Calu3 (cell line): ENCODE measurements at regions of chr13 and their contacts with region 1.

Region 1: GRCh38 chr13:36567485-36567884 is 106.3 kb upstream of the SERTM1 start:
- DNase-seq: no peak
- H3K4me3 Mint-ChIP-seq: no peak overlapping the region
- H3K27ac Mint-ChIP-seq: no peak overlapping the region
- H3K4me1 Mint-ChIP-seq: peaks cover 8% of the 10 kb centered on the region
- H3K27me3 Mint-ChIP-seq: no peaks in the 10 kb centered on the region
- CTCF ChIP-seq: no peak

Region 2: DNA sequence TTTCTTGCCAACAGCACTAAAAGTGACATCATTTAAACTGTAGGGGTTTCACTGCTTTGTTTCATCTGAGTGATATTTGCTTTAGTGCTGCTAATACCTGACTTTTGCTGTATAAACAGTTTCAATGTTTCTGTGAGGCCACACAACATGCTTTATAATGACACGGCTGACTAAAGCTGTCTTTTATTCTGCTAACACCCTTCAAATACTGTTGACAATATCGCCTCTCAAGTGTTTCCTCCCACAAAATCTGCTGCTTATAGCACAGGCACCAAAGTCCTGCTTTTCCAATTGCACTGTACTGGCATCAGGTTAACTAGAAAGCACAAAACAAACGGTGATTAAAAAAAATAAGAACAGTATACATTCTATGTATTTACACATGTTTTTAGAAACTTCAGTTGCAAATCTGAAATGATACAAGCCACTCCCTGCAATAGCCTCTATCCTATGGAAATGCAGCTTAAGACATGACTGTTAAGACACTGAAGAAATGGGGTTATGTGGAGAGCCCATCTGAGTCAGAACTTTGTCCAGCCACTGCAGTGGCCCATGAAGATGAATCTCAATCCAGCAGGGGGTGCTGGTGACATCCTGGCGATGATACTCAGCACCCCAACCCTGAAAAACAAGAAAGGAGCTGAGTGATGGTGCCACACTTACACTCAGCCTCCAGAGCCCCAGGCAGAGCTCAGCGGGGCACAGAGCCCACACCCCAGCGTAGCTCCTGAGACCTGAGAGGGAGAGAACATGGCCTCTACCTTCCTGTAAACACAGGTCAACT is 280.9 kb after region 1 on chr13:
- CTCF ChIA-PET with region 1: no interaction called
- intact Hi-C with region 1: loop called (anchors 10 kb)
- DNase-seq: peak; percentile 3
- H3K4me3 Mint-ChIP-seq: no peak overlapping the region
- H3K27ac Mint-ChIP-seq: no peak overlapping the region
- H3K4me1 Mint-ChIP-seq: peaks cover 8% of the 10 kb centered on the region
- H3K27me3 Mint-ChIP-seq: no peaks in the 10 kb centered on the region
- CTCF ChIP-seq: peak; percentile 23